ENCODE measurements at regions of chr3 and their contacts with region 1.

Region 1: DNA sequence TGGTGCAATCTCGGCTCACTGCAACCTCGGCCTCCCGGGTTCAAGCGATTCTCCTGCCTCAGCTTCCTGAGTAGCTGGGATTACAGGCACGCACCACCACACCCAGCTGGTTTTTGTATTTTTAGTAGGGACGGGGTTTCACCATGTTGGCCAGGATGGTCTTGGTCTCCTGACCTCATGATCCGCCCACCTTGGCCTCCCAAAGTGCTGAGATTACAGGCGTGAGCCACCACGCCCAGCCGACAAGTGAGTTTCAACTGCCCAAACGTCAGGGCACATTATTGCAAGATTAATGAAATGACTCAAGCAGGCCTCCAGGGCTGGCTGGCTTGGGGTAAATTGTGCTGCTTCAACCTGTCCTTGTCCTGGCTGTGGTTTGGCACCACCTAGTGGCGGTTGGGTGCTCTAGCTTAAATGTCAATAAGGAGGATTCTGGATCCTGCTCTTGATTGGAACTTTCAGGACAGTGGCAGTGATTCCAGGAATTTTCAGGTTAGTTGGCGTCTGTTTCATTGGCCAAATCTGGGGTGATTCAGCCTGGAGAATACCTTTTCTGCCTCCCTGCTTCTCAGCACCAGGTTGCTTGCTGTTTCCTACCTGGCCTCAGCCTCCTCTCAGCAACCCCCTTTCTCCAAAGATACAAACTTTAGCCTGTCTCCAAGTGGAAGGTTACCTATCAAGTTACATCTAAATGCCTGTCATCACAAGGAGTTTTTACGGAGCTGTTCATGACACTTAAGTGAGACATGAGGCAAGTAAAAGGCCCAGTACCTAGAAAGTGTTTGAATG is 32.4 kb upstream of the SACM1L start:
- DNase-seq: peak; percentile 95
- H3K4me3 ChIP-seq: no peak overlapping the region
- H3K27ac ChIP-seq: peak overlapping the region; percentile 54
- H3K4me1 ChIP-seq: peaks cover 14% of the 10 kb centered on the region
- H3K27me3 ChIP-seq: no peaks in the 10 kb centered on the region

Region 2: DNA sequence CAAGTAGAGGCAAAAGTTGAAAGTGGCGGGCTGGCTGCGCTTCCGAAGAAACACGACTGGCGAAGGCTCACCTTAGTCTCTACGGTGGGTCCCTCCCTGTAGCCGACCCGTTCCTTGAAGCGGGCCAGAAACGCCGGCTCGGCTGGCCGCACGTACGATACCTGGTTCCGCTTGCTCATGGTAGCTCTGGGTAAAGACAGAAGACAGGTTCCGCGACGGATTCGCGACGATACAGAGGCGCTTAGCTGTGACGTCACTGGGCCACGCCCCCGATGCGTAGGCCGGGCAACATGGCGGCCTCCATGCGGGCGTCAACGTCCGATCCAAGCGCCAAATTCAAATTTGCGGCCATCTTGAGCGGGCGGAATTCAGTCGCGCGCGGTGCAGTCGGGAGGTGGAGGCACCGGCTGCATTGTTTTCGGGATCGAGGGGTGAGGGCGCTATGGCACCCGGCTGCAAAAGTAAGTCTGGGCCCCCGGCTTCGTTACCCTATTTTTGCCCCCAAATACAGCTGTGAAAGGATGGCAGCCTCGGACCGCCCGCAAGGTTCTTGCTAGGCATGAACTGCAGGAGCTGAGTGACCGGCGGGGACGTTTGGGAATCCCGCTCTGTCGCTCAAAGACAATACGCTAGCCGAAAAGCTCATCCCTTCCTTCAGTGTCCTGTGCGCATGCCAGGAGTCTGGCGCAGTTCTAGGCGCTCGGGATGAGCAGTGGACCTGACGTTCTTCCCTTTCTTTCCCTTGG is 895.2 kb before region 1 on chr3 and contains the starts of genes KIAA1143 and KIF15:
- in situ Hi-C with region 1: no loop called
- DNase-seq: peak; percentile 97
- H3K4me3 ChIP-seq: peak within 1 kb of the TSS; percentile 99
- H3K27ac ChIP-seq: peak within 1 kb of the TSS; percentile 58
- H3K4me1 ChIP-seq: no peaks in the 10 kb centered on the region; the same call in none of the 2 replicates
- H3K27me3 ChIP-seq: no peaks in the 10 kb centered on the region
- total RNA-seq, gene KIAA1143: 24.3 and 25.0 TPM in 2 replicates
- total RNA-seq, gene KIF15: 3.3 and 3.9 TPM in 2 replicates

Region 3: DNA sequence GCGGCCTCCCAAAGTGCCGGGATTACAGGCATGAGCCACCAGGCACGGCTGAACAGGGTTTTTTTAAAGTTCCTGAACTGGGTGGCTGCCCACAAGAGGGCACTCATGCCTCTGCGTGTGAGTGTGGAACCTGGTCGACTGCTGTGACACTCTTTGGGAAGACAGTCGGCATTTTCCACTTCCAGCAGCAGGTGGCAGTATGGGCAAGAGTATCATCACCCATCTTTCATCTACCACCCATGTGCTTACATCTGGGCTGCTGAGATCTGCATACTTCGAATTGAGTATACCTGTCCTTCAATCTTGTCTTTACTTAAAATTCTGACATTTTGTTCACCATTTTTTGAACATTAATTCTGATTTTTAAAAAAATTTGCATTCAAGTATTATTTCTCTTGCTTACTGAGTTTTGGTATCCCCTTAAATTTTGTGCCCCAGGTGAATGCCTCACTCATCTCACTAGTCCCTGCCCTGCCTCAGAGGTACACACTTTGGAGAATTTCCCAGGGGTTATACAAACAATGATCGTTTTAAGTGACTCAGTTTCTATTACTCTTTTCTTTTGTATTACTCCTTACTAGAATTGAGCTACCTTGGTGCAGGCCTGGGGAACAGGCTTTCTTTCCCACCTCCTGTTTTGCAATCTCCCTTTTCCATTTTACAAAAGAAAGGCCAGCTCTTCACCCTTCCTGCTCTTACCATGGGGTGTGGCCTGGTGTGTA is 618.9 kb before region 1 on chr3:
- in situ Hi-C with region 1: loop called (anchors 10 kb)
- DNase-seq: peak; percentile 96
- H3K4me3 ChIP-seq: 0 out of 2 replicates have a peak overlapping the region, but pooled peaks have one; percentile 13
- H3K27ac ChIP-seq: no peak overlapping the region
- H3K4me1 ChIP-seq: peaks cover 8% of the 10 kb centered on the region
- H3K27me3 ChIP-seq: no peaks in the 10 kb centered on the region

Region 4: GRCh38 chr3:45224824-45225464 is 431.8 kb before region 1 on chr3:
- in situ Hi-C with region 1: loop called (anchors 25 kb)
- DNase-seq: peak; percentile 88
- H3K4me3 ChIP-seq: peak overlapping the region; percentile 93
- H3K27ac ChIP-seq: peak overlapping the region; percentile 33
- H3K4me1 ChIP-seq: 0 out of 2 replicates have a peak, but pooled peaks cover 11% of the 10 kb centered on the region
- H3K27me3 ChIP-seq: no peaks in the 10 kb centered on the region

Region 5: DNA sequence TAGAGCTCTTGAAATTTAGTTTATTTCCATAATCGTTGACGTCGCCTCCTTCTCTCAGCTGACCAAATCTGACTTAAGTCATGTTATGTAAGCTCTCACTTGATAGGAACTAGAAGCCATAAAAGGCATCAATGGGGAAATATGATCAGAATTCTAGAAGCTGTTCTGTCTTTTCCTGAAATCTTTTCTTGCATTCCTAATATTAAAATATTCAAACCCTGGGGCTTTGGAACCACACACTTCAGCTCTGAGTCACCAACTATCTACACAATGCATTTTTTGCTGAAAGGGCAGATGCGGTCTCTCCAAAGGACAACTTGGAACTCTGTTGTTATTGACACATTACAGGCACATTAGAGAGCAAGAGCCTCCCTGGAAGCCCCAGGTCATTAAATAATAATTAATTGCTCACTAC is 177.1 kb before region 1 on chr3:
- in situ Hi-C with region 1: no loop called
- DNase-seq: peak; percentile 84
- H3K4me3 ChIP-seq: no peak overlapping the region
- H3K27ac ChIP-seq: peak overlapping the region; percentile 44
- H3K4me1 ChIP-seq: peaks cover 31% of the 10 kb centered on the region
- H3K27me3 ChIP-seq: no peaks in the 10 kb centered on the region

Region 6: DNA sequence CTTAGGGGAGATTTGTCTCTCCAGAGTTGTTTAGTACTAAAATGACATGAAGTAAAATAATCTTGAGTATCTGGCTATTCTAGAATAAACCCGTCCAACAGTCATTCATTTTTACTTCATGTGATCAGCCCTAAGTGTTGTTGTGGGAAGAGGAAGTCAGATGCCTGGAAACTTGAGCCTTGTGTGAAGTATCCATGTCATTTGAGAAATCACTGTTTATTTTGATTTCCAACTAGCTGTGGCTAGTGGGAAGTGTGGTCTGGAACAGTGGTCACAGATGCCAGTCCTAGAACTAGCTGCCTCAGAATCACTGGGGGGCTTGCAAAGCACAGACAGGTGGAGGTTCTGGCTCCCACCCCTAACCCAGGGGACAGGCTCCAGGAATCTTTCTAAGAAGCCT is 139.9 kb before region 1 on chr3:
- in situ Hi-C with region 1: loop called (anchors 5 kb)
- DNase-seq: no peak
- H3K4me3 ChIP-seq: no peak overlapping the region
- H3K27ac ChIP-seq: no peak overlapping the region
- H3K4me1 ChIP-seq: no peaks in the 10 kb centered on the region
- H3K27me3 ChIP-seq: no peaks in the 10 kb centered on the region